Tibial artery (tissue), 4 donors: ENCODE measurements at regions of chr7 and their contacts with region 1.

Region 1: DNA sequence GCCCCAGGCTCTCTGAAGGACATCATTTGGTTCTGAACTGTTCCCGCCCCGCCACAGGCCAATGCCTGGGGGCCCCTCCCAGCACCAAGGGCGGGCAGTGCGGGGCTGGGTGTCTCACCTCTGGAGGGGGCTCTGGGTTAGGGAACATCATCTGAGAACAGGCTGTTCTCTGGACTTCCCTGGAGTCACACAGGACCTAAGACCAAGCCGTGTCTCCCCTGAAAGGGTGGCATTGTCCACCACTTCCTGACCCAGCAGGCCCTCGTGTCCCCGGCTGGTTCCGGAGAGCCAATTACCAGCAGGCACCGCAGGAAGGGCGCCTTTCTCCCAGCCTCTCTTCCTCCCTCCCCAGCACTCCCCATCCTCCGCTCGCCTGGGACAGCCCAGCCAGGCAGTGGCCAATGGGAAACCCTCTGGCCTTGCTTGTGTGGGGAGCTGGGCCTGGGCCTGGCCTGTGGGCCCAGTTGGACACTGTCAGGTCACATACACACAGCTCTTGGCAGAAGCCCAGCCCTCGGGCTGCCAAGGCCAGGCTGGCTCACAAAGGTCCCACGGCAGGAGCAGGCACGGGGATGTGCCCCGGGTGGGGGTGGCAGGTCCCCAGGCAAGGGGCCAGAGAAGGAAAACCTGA is 119.5 kb downstream of the SPDYE5 start:
- DNase-seq: peak; percentile 85 to 95
- H3K4me3 ChIP-seq: peak overlapping the region; percentile 2 to 14
- H3K27ac ChIP-seq: peak overlapping the region; percentile 70 to 81
- H3K4me1 ChIP-seq: peaks cover 0 to 23% (median 11%) of the 10 kb centered on the region in 4 donors
- H3K27me3 ChIP-seq: no peaks in the 10 kb centered on the region
- CTCF ChIP-seq: no peak

Region 2: DNA sequence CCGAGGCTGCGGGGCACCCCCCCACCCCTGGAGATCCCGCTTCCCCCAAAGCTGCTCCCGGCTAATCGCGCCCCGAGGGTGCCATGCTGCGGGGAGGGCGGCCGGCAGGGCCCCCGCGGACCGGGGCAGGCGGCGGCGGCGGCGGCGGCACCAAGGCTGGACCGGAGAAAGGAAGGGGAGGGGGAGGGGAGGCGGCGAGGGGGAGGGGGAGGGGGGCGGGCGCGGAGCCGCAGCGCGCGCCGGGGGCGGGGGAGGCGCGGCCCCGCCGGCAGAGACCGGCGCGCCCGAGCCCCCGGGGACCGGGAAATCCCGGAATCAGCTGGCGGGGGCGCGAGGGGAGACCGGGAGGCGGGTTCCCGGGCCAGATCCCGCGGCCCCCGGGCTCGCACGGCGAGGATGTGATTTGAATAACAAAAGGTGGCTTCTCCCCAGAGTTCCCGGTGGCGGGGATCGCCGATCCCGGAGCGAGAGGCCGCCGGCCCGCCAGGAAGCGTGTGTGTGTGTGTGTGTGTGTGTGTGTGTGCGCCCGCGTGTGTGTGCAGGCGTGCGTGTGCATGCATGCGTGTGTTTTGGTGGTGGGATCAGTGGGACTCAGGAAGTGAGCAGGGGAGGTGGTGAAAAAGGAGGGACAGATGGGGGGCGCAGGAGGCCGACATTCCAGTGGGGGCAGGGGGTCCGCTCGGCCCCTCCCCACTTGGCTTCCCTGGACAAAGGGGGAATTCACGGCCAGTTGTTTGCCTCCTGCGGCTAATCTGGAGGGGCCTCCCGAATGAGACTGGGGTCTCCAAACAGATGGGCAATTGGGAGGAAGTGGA is 27.6 kb after region 1 on chr7:
- intact Hi-C with region 1: loop called (anchors 2 kb)
- DNase-seq: peak in 1 of 2 donors; percentile 76
- H3K4me3 ChIP-seq: peak overlapping the region; percentile 71 to 80
- H3K27ac ChIP-seq: peak overlapping the region; percentile 78 to 80
- H3K4me1 ChIP-seq: peaks cover 0 to 50% (median 29%) of the 10 kb centered on the region in 4 donors
- H3K27me3 ChIP-seq: no peaks in the 10 kb centered on the region
- CTCF ChIP-seq: no peak

Region 3: DNA sequence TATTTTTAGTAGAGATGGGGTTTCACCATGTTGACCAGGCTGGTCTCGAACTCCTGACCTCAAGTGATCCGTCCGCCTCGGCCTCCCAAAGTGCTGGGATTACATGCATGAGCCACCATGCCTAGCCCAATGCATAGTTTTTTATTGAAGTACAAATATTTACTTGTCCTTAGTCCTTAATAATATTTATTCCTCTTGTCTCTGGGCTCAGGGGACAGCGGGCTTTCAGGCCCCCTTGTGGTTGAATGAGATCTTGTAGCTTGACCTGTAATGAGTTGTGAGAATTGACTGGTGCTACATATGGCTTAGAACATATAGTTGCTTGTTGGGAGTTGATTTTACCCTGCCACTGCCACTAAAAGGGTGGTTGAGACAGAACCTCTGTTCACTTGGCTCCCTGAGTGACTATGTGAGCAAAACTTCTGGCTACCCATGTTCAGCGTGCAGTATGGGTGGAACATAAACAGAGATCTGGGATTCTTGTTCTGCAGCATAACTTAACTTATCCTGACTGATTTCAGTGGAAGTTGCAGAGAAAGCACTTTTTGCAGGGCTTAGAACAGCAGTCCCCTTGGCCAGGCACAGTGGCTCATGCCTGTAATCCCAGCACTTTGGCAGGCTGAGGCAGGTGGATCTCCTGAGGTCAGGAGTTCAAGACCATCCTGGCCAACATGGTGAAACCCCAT is 145.5 kb after region 1 on chr7:
- intact Hi-C with region 1: loop called (anchors 10 kb)
- DNase-seq: no peak
- H3K4me3 ChIP-seq: no peak overlapping the region
- H3K27ac ChIP-seq: no peak overlapping the region
- H3K4me1 ChIP-seq: peaks cover 0 to 13% (median 5%) of the 10 kb centered on the region in 4 donors
- H3K27me3 ChIP-seq: no peaks in the 10 kb centered on the region
- CTCF ChIP-seq: peak; percentile 27 to 32